ENCODE measurements at regions of chr1 and their contacts with region 1.

Region 1: DNA sequence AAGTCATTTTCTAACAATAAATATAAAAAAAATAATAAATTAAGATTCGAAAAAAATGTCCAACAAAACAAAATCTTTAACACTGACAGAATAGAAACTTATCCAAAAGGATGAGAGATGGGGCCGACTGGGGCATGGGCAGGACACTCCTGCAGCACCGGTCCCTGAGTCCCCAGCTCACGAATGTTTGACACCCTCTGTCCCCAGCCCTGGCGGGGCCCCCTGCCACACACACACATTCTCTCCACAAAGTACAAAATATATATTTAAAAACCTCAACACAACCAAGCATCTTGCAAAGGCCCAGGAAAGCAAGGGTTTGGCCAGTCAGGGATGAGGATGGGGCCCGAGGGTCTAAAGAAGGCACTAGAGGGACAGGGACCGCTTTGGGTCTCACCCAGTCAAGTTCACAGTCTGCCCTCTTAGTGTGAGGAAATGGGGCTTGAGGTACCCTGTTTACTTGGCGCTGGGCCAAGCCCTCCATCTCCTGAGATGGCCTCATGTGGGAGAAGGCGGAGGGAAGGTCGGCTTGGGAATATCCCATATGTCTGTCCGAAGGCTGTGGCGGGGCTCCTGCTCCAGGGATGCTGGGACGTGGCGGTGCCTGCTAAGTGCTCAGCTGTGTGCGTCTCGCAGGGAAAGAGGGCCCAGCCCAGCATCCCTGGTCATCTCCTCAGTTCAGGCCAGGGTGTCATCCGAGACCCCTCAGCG is 31.3 kb downstream of the EPHA2 start:
- DNase-seq: peak; percentile 16
- ATAC-seq: no peak

Region 2: DNA sequence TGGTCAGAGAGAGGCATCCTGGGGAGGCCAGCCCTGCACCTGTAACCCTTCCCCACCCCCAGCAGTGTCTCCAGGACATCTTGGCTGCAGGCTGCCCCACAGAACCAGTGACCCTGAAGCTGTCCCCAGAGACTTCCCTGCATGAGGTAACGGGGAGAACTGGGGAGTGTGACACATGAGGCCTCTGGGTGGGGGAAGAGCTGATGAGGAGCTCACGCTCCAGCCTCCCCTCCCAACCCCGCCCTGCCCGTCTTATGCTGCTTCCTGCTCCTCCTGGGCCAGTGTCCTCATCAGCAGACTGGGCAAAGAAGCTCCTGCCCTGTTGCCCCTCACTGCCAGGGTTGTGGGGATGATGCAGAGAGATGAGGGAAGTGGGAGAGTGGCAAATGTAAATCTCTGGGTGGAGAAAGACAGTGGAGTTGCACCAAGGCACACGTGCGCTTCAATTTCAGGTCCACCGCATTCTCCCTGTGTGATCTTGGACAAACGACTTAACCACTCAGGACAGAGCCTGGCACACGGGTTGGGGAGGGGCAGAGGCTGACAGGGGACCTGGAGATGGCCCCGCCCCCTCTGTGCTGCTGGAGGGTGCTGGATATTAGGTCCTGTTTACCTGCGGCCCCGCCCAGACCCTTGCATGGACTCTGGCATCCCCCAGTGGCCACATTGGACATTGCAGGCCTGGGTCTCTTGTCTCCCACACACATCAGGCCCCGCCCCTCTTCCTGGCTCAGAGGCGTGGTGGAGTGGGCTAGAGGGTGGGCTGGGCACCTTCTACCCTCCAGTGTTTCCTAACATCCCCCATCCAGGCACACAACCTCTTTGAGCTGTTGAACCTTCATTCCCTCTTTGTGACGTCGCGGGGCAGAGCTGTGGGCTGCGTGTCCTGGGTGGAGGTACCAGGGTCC is 68.7 kb before region 1 on chr1:
- intact Hi-C with region 1: no loop called
- DNase-seq: peak; percentile 93
- ATAC-seq: peak; percentile 71

Region 3: GRCh38 chr1:16091296-16091695 is 33.2 kb before region 1 on chr1:
- intact Hi-C with region 1: loop called (anchors 5 kb)
- DNase-seq: no peak
- ATAC-seq: no peak

Region 4: GRCh38 chr1:16164213-16165072 is 39.9 kb after region 1 on chr1:
- intact Hi-C with region 1: no loop called
- DNase-seq: no peak
- ATAC-seq: no peak

Region 5: DNA sequence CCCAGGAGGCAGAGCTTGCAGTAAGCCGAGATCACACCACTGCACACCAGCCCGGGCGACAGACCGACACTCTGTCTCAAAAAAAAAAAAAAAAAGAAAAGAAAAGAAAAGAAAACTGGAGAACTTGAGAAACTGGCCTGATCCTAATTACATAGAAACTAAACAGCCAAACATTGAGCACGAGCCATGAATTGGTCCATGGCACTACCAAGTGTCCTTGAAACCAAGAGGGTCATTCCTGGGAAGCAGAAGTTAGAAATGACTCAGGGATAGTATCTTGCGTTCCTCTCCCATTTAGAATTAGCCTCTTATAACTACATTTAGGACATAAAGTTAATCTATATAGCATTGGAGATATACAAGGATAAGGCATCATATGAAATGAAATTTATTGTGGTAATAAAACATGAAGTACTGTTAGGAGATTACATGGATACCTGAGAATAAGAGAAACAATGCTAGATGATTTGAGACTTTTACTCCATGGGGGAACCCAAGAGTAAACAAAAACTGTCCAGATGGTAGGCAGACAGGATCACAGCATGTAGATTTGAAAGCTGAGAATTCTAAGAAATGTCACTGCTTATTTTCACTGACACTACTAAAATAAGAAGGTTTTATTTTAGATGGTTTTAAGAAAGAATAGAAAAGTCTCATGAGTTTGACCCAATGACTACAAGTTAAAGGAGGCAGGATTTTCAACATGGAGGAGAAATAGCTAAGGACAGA is 151.9 kb after region 1 on chr1:
- intact Hi-C with region 1: no loop called
- DNase-seq: no peak
- ATAC-seq: no peak

Measured in Right ventricle myocardium inferior (tissue), 1 donor.